CD4-positive, alpha-beta T cell (primary cell): ENCODE measurements at regions of chr10 and their contacts with region 1.

Region 1: GRCh38 chr10:100562008-100562711 is 26.4 kb downstream of the HIF1AN start:
- DNase-seq: peak; percentile 66 to 91 (median 76)
- ATAC-seq: peak; percentile 99
- H3K4me3 ChIP-seq: peak overlapping the region; percentile 32
- H3K4me3 Mint-ChIP-seq: peak overlapping the region; percentile 30
- H3K27ac ChIP-seq: no peak overlapping the region
- H3K27ac Mint-ChIP-seq: no peak overlapping the region
- H3K4me1 ChIP-seq: peaks cover 21% of the 10 kb centered on the region
- H3K4me1 Mint-ChIP-seq: peaks cover 23% of the 10 kb centered on the region
- H3K27me3 ChIP-seq: peaks cover 4 to 27% of the 10 kb centered on the region in 2 experiments
- H3K27me3 Mint-ChIP-seq: peaks cover 32% of the 10 kb centered on the region
- CTCF ChIP-seq: peak; percentile 93

Region 2: GRCh38 chr10:100535715-100536353 is 26.3 kb before region 1 on chr10 and contains the start of gene HIF1AN:
- CTCF ChIA-PET with region 1: interaction called, 8 read pairs
- POLR2A ChIA-PET with region 1: interaction called, 10 read pairs
- intact Hi-C with region 1: no loop called
- DNase-seq: peak; percentile 75 to 97 (median 85)
- ATAC-seq: peak; percentile 99
- H3K4me3 ChIP-seq: peak within 1 kb of the TSS; percentile 77
- H3K4me3 Mint-ChIP-seq: peak within 1 kb of the TSS; percentile 31
- H3K27ac ChIP-seq: peak within 1 kb of the TSS; percentile 59 to 67
- H3K27ac Mint-ChIP-seq: peak within 1 kb of the TSS; percentile 27
- H3K4me1 ChIP-seq: peaks cover 20% of the 10 kb centered on the region
- H3K4me1 Mint-ChIP-seq: peaks cover 9% of the 10 kb centered on the region
- H3K27me3 ChIP-seq: no peaks in the 10 kb centered on the region
- H3K27me3 Mint-ChIP-seq: no peaks in the 10 kb centered on the region
- CTCF ChIP-seq: peak; percentile 88
- total RNA-seq, gene HIF1AN: 29.7 to 30.5 TPM

Region 3: GRCh38 chr10:100743626-100744135 is 181.5 kb after region 1 on chr10:
- CTCF ChIA-PET with region 1: interaction called, 11 read pairs
- POLR2A ChIA-PET with region 1: interaction called, 4 read pairs
- intact Hi-C with region 1: loop called (anchors 1 kb)
- DNase-seq: peak in 11 of 14 experiments; percentile 20 to 80 (median 31)
- ATAC-seq: peak; percentile 82
- H3K4me3 ChIP-seq: no peak overlapping the region
- H3K4me3 Mint-ChIP-seq: peak overlapping the region; percentile 40
- H3K27ac ChIP-seq: no peak overlapping the region
- H3K27ac Mint-ChIP-seq: no peak overlapping the region
- H3K4me1 ChIP-seq: peaks cover 36% of the 10 kb centered on the region
- H3K4me1 Mint-ChIP-seq: peaks cover 47% of the 10 kb centered on the region
- H3K27me3 ChIP-seq: peaks cover 77 to 98% of the 10 kb centered on the region in 2 experiments
- H3K27me3 Mint-ChIP-seq: peaks cover 84% of the 10 kb centered on the region
- CTCF ChIP-seq: peak; percentile 27

Region 4: GRCh38 chr10:100872034-100872791 is 310.1 kb after region 1 on chr10:
- CTCF ChIA-PET with region 1: interaction called, 3 read pairs
- POLR2A ChIA-PET with region 1: no interaction called
- intact Hi-C with region 1: loop called (anchors 1 to 5 kb)
- DNase-seq: peak in 13 of 14 experiments; percentile 7 to 54 (median 29)
- ATAC-seq: no peak
- H3K4me3 ChIP-seq: no peak overlapping the region
- H3K4me3 Mint-ChIP-seq: no peak overlapping the region
- H3K27ac ChIP-seq: no peak overlapping the region
- H3K27ac Mint-ChIP-seq: no peak overlapping the region
- H3K4me1 ChIP-seq: no peaks in the 10 kb centered on the region
- H3K4me1 Mint-ChIP-seq: no peaks in the 10 kb centered on the region
- H3K27me3 ChIP-seq: peaks cover 1 to 2% of the 10 kb centered on the region in 2 experiments
- H3K27me3 Mint-ChIP-seq: peaks cover 20% of the 10 kb centered on the region
- CTCF ChIP-seq: peak; percentile 42

Region 5: DNA sequence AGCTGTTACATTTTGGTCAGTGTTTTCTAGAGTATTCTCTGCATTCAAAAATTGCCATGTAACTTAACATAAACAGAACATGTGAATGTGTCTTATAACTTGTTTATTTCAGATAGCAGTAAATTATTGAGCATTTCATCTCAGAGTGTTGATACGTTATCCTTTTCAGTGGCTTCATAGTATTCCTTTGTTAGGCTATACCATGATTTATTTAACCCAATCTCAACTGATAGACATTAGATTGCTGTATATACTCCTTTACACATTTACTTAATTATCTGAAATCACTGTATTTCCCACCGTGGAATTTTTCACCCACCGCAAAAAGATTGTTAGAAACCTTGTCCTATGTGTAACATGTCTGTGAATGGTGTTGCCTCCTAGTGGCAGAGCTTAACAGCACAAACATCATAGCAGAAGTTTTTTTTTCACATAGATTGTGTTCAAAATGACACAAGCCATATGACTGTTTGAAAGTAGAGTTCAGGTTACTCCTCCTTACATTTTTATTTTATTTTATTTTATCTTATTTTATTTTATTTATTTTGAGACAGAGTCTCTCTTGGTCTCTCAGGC is 372.0 kb after region 1 on chr10:
- CTCF ChIA-PET with region 1: interaction called, 3 read pairs
- POLR2A ChIA-PET with region 1: no interaction called
- intact Hi-C with region 1: loop called in 1 of 2 experiments (anchors 5 kb)
- DNase-seq: peak in 2 of 14 experiments; percentile 30 to 32
- ATAC-seq: no peak
- H3K4me3 ChIP-seq: no peak overlapping the region
- H3K4me3 Mint-ChIP-seq: no peak overlapping the region
- H3K27ac ChIP-seq: no peak overlapping the region
- H3K27ac Mint-ChIP-seq: no peak overlapping the region
- H3K4me1 ChIP-seq: no peaks in the 10 kb centered on the region
- H3K4me1 Mint-ChIP-seq: no peaks in the 10 kb centered on the region
- H3K27me3 ChIP-seq: no peaks in the 10 kb centered on the region
- H3K27me3 Mint-ChIP-seq: no peaks in the 10 kb centered on the region
- CTCF ChIP-seq: peak; percentile 57